Spleen (tissue), 13 donors: ENCODE measurements at regions of chr1 and their contacts with region 1.

Region 1: DNA sequence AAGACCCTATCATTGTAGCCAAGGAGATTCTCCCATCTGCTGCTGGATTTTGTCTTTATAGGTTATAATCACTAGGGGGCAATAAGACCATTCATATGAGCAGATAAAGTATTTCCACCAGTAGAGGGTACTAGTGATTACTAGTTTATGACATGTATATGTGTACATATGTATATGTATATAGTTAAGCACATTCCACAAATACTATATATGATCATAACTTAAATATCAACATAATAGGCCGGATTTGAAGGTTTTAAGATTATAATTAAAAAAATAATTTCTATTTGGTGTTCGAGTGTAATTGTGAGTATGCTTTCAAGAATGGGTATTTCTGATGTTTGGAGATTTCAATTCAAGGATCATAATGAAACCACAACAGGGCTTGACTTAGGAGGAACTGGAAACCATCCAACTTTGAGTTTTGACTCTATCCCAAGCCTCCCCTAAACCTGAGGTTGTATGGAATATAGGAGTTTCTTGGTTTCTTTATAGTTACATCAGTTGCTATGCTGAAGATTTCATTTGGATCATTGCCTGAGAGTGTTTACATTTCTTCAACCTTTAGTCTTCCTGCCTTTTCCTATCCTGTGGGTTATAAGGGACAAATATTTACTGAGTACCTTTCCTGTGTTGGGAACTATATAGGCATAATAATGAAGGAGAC is 16.9 kb downstream of the TCEANC2 start:
- DNase-seq: no peak
- H3K4me3 ChIP-seq: no peak overlapping the region
- H3K27ac ChIP-seq: no peak overlapping the region
- H3K4me1 ChIP-seq: peaks cover 0 to 9% (median 2%) of the 10 kb centered on the region in 6 donors
- H3K27me3 ChIP-seq: no peaks in the 10 kb centered on the region
- CTCF ChIP-seq: peak; percentile 48 to 88 (median 73)
- POLR2A ChIP-seq: no peak

Region 2: DNA sequence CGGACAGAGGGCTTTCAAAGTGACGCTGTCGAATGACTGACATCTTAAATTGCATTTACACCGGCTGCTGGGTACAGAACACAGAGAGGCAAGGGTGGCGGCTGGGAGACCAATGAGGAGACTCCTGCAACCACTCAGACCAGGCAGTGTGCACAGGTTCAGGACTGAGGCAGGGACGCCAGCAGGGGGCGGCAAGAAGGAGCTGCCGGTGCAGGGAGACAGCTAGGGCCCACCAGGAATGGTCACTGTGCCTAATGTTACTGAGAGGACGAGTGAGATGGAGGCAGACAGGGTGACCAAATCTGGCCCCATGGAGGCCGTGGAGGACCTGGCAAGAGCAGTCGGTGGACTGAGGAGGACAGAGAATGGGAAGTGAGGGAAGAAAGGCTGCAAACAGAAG is 354.8 kb before region 1 on chr1:
- intact Hi-C with region 1: no loop called
- DNase-seq: no peak
- H3K4me3 ChIP-seq: no peak overlapping the region
- H3K27ac ChIP-seq: no peak overlapping the region
- H3K4me1 ChIP-seq: no peaks in the 10 kb centered on the region
- H3K27me3 ChIP-seq: peaks cover 0 to 14% (median 0%) of the 10 kb centered on the region in 7 donors
- CTCF ChIP-seq: peak in 2 of 11 experiments; percentile 8 to 22
- POLR2A ChIP-seq: no peak

Region 3: DNA sequence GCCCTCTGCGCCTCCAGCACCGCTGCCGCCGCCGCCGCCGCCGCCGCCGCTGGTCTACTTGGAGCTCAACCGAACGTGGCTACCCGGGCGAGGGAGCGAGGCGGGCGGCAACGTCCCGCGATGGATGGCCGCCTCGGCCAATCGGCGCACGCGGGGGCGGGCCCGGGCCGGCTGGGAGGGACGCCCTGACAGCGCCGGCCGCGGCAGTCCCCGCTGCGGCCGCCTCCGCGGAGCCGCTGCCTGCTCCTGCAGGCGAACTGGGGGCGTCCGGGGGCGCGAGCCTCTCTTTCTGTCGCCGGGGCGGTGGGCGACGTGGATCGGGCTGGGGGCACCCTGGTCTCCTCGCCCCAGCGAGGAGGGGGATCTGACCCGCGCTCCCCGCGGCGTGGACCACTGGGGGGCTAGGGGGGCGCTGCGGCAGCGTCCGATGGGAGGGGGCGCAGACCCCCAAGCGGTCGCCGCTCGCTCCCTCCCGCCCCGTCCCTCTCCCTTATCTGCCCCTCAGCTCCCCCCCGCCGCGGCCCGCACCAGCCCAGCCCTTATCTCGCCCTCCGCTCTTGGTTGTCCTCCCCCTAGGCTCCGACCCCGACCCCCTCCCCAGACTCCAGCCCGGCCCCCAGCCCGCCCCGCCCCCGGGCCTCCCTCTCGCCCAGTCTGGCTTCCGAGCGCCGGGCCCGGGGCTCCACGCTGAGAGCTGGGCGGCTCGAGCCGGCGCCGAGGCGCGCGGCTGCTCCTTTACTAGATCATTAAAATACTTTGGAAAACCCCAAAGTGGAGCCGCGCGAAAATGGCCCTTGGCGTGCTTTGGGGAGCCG is 336.2 kb after region 1 on chr1 and contains the start of gene SSBP3:
- intact Hi-C with region 1: loop called (anchors 5 kb)
- DNase-seq: peak; percentile 99
- H3K4me3 ChIP-seq: peak within 1 kb of the TSS; percentile 71 to 95 (median 84)
- H3K27ac ChIP-seq: peak within 1 kb of the TSS; percentile 76 to 94 (median 90)
- H3K4me1 ChIP-seq: peaks cover 21 to 70% (median 61%) of the 10 kb centered on the region in 6 donors
- H3K27me3 ChIP-seq: peaks cover 0 to 15% (median 0%) of the 10 kb centered on the region in 7 donors
- CTCF ChIP-seq: peak in 4 of 11 experiments; percentile 6 to 52 (median 26)
- POLR2A ChIP-seq: peak in 2 of 3 donors; percentile 55 to 73
- total RNA-seq, gene SSBP3: 24.4 to 73.5 (median 55.4) TPM

Region 4: GRCh38 chr1:54488779-54489626 is 418.7 kb after region 1 on chr1:
- intact Hi-C with region 1: loop called (anchors 5 kb)
- DNase-seq: peak; percentile 95
- H3K4me3 ChIP-seq: peak overlapping the region; percentile 60 to 81 (median 63)
- H3K27ac ChIP-seq: peak overlapping the region; percentile 78 to 91 (median 88)
- H3K4me1 ChIP-seq: peaks cover 17 to 52% (median 36%) of the 10 kb centered on the region in 6 donors
- H3K27me3 ChIP-seq: peaks cover 0 to 42% (median 0%) of the 10 kb centered on the region in 7 donors
- CTCF ChIP-seq: peak; percentile 86 to 98 (median 96)
- POLR2A ChIP-seq: no peak

Region 5: GRCh38 chr1:54800899-54801759 is 730.8 kb after region 1 on chr1 and contains the start of gene TTC22:
- intact Hi-C with region 1: loop called (anchors 10 kb)
- DNase-seq: peak; percentile 94
- H3K4me3 ChIP-seq: peak within 1 kb of the TSS; percentile 41 to 85 (median 58)
- H3K27ac ChIP-seq: peak within 1 kb of the TSS; percentile 32 to 87 (median 72)
- H3K4me1 ChIP-seq: peaks cover 9 to 58% (median 39%) of the 10 kb centered on the region in 6 donors
- H3K27me3 ChIP-seq: peaks cover 0 to 22% (median 15%) of the 10 kb centered on the region in 7 donors
- CTCF ChIP-seq: peak; percentile 25 to 77 (median 61)
- POLR2A ChIP-seq: no peak
- total RNA-seq, gene TTC22: 2.7 to 6.4 (median 3.7) TPM